Heart right ventricle (tissue), 16 donors: ENCODE measurements at regions of chr14 and their contacts with region 1.

Region 1: DNA sequence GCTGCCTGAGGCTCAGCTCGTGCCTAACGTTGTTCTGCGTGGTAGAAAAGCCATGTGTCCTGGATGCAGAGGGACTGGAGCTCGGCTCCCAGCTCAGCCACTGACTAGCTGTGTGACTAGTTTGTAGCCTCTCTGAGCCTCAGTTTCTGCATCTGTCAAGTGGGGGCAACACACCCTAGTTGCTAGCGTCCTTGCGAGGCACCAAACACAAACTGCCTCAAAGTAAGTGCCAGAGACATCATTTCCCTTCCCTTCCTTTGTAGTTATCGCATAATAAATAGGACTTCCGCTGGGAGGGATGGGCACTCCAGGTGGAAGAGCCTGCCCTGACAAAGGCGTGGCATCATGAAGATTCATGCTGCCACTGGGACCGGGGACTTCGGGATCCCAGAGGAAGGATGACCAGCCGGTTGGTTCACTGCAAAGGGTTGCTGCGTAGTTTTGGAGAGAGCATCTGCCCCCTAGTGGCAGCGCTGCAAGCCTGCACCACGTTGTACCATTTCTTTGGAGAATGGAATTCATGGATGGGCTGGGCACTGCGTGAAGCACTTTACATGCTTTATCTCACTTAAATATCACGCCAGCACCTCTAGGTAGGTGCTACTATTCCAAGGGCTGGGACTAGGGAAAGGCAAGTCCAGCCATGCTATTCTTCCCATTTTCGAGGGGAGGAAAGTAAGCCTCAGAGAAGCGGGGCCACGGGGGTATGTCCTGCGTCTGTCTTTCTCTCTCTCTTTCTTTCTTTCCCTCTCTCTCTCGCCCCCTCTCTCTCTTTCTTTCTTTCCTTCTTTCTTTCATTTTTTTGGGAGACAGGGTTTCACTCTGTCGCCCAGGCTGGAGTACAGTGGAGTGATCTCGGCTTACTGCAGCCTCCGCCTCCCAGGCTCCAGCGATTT is 4.6 kb downstream of the CCDC197 start:
- DNase-seq: peak; percentile 38 to 49
- ATAC-seq: peak; percentile 67 to 85 (median 80)
- H3K4me3 ChIP-seq: no peak overlapping the region
- H3K27ac ChIP-seq: no peak overlapping the region
- H3K4me1 ChIP-seq: peaks cover 3 to 31% (median 17%) of the 10 kb centered on the region in 9 donors
- H3K27me3 ChIP-seq: peaks cover 0 to 22% (median 0%) of the 10 kb centered on the region in 7 donors
- CTCF ChIP-seq: peak; percentile 91 to 98 (median 97)

Region 2: GRCh38 chr14:93566065-93566693 is 435.6 kb before region 1 on chr14:
- intact Hi-C with region 1: no loop called
- DNase-seq: no peak
- ATAC-seq: peak in 4 of 8 donors; percentile 27 to 54 (median 41)
- H3K4me3 ChIP-seq: no peak overlapping the region
- H3K27ac ChIP-seq: no peak overlapping the region
- H3K4me1 ChIP-seq: no peaks in the 10 kb centered on the region
- H3K27me3 ChIP-seq: peaks cover 0 to 7% (median 0%) of the 10 kb centered on the region in 7 donors
- CTCF ChIP-seq: no peak

Region 3: DNA sequence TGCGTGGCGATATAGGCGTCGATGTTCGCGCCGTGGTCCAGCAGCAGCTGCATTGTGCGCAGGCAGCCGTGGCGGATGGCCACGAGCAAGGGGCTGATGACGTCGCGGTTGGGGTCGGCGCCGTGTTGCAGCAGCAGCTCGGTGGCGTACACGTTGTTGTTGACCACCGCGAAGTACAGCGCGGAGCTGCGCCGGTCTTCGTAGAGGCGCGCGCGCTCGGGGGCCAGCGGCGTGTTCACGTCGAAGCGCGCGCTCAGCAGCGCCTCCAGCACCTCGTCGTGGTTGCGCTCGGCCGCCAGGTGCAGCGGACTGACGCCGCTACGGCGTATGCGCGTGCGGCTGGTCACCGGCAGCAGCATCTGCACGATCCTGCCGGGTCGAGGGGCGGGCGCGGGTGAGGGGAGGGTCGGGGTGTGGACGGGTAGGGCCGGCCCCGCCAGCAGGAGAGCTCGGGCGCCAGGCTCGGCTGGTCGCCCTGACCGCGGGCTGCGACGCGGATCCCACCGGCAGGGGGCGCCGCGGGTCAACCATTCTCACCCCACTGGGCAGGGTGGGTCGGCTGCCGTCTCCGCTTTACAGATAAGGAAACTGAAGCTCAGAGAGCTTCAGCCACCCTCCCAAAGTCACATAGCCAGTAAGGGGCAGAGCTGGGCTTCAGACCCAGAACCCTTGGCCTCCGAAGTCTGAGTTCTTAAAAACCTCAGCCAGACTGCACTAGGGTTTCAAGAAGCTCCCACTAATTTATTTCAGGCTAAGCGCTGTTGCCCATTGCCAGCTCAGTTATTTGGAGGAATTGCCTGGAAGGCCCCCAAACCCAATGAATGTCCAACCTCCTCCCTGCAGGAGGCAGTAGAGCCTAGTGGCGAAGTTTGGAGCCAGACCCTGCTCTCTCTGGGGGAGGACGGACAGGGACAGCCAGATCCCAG is 62.2 kb before region 1 on chr14:
- intact Hi-C with region 1: loop called (anchors 1 to 5 kb)
- DNase-seq: peak; percentile 72 to 82
- ATAC-seq: peak; percentile 73 to 87 (median 77)
- H3K4me3 ChIP-seq: peak overlapping the region in 5 of 10 donors; percentile 6 to 48 (median 32)
- H3K27ac ChIP-seq: peak overlapping the region in 1 of 10 donors; percentile 17
- H3K4me1 ChIP-seq: peaks cover 0 to 20% (median 14%) of the 10 kb centered on the region in 9 donors
- H3K27me3 ChIP-seq: peaks cover 0 to 25% (median 17%) of the 10 kb centered on the region in 7 donors
- CTCF ChIP-seq: peak; percentile 77 to 96 (median 86)

Region 4: DNA sequence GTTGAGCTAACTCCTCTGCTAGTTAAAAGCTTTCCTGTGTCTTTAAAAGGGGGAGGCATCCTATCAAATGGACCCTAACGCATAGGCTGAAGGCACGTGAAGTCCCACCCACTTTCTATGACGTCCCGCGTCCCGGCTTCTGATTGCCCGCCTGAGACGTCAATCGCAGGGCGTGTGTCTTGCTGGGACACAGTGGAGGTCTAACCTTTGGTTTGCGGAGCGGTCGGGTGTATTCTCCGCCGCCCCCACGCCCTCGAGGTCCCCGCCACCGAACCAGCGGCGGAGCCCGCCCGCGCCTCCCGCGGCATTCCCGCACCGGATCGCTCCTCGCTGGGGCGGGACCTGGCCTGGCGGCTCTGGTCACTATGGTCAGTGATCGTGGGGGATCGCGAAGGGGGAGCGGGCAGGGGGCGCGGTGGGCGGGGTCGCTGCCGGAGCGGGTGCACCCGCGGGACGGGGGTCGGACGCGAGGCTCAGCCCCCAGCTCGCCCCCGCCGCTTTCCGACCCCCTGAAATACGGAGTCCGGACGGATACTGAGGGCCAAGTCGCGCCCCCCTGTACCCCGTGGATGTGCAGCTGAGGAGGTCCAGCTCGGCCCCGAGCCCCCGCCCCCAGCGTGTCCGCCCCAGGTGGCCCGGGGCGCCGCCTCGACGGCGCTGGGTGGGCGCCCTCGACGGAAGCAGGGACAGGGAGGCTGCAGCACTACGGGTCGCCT is 24.6 kb after region 1 on chr14 and contains the start of gene OTUB2:
- intact Hi-C with region 1: no loop called
- DNase-seq: peak; percentile 98
- ATAC-seq: peak; percentile 94 to 100 (median 100)
- H3K4me3 ChIP-seq: peak within 1 kb of the TSS; percentile 40 to 77 (median 70)
- H3K27ac ChIP-seq: peak within 1 kb of the TSS in 2 of 10 donors; percentile 15 to 45
- H3K4me1 ChIP-seq: peaks cover 0 to 28% (median 6%) of the 10 kb centered on the region in 9 donors
- H3K27me3 ChIP-seq: peaks cover 0 to 4% (median 0%) of the 10 kb centered on the region in 7 donors
- CTCF ChIP-seq: no peak
- total RNA-seq, gene OTUB2: 0.07 to 0.37 (median 0.15) TPM in 9 of 10 donors, not detected in the other